GM12878 (cell line): ENCODE measurements at regions of chr17 and their contacts with region 1.

Region 1: GRCh38 chr17:44084131-44084544 is 13.6 kb downstream of the G6PC3 start:
- DNase-seq: no peak
- ATAC-seq: peak; percentile 76
- H3K4me3 ChIP-seq: no peak overlapping the region
- H3K27ac ChIP-seq: no peak overlapping the region
- H3K4me1 ChIP-seq: no peaks in the 10 kb centered on the region
- H3K27me3 ChIP-seq: no peaks in the 10 kb centered on the region
- CTCF ChIP-seq: peak; percentile 13 to 34 (median 30); a peak in 3 of 6 replicates
- EP300 ChIP-seq: no peak
- POLR2A ChIP-seq: no peak
- RAD21 ChIP-seq: no peak

Region 2: GRCh38 chr17:43673516-43674323 is 410.4 kb before region 1 on chr17:
- CTCF ChIA-PET with region 1: no interaction called
- POLR2A ChIA-PET with region 1: no interaction called
- RAD21 ChIA-PET with region 1: no interaction called
- SMC1A ChIA-PET with region 1: no interaction called
- in situ Hi-C with region 1: no loop called
- intact Hi-C with region 1: no loop called
- DNase-seq: no peak
- ATAC-seq: peak; percentile 48
- H3K4me3 ChIP-seq: no peak overlapping the region
- H3K27ac ChIP-seq: no peak overlapping the region
- H3K4me1 ChIP-seq: peaks cover 42% of the 10 kb centered on the region
- H3K27me3 ChIP-seq: no peaks in the 10 kb centered on the region
- CTCF ChIP-seq: peak; percentile 92 to 97 (median 94)
- EP300 ChIP-seq: no peak
- POLR2A ChIP-seq: no peak
- RAD21 ChIP-seq: peak; percentile 76

Region 3: DNA sequence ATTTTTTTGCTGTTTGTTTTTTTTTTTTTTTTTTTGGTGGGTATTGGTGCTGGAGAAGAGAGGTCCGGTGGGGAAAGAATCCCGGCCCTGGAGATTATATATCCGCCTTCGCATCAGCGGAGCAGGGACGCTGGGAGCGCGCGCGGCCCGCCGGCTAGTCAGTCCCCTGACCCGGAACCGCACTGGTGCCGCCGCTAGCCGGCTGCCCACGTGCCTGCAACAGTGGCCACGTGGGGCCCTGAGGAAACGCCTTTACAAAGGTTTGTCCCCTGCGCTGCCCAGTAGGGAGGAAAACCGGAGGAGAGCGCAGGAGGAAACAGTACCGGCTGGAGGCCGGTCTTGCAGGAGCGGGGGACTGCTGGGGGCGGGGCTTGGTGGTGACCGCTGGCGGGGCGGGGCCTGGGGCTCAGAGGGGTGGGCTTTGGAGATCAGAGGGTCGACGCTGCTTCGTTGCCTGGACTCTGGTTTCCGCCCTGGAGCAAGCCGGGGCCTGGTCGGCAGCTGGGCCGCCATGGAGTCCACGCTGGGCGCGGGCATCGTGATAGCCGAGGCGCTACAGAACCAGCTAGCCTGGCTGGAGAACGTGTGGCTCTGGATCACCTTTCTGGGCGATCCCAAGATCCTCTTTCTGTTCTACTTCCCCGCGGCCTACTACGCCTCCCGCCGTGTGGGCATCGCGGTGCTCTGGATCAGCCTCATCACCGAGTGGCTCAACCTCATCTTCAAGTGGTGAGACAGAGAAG is 13.5 kb before region 1 on chr17 and contains the start of gene G6PC3:
- CTCF ChIA-PET with region 1: interaction called, 3 read pairs
- POLR2A ChIA-PET with region 1: interaction called, 11 read pairs
- RAD21 ChIA-PET with region 1: interaction called, 6 read pairs
- SMC1A ChIA-PET with region 1: no interaction called
- in situ Hi-C with region 1: no loop called
- intact Hi-C with region 1: no loop called
- DNase-seq: peak; percentile 81
- ATAC-seq: peak; percentile 88
- H3K4me3 ChIP-seq: peak within 1 kb of the TSS; percentile 91
- H3K27ac ChIP-seq: peak within 1 kb of the TSS; percentile 80
- H3K4me1 ChIP-seq: 0 out of 2 replicates have a peak, but pooled peaks cover 3% of the 10 kb centered on the region
- H3K27me3 ChIP-seq: no peaks in the 10 kb centered on the region
- CTCF ChIP-seq: peak in 1 of 3 experiments; percentile 4; a peak in 1 of 6 replicates
- EP300 ChIP-seq: 0 out of 4 replicates have a peak, but pooled peaks of 1 of the 2 experiments have one; percentile 18
- POLR2A ChIP-seq: peak; percentile 83
- RAD21 ChIP-seq: 0 out of 2 replicates have a peak, but pooled peaks have one; percentile 20
- polyA plus RNA-seq, gene G6PC3: 13.0 to 18.2 TPM